ENCODE measurements at regions of chr11 and their contacts with region 1.

Region 1: DNA sequence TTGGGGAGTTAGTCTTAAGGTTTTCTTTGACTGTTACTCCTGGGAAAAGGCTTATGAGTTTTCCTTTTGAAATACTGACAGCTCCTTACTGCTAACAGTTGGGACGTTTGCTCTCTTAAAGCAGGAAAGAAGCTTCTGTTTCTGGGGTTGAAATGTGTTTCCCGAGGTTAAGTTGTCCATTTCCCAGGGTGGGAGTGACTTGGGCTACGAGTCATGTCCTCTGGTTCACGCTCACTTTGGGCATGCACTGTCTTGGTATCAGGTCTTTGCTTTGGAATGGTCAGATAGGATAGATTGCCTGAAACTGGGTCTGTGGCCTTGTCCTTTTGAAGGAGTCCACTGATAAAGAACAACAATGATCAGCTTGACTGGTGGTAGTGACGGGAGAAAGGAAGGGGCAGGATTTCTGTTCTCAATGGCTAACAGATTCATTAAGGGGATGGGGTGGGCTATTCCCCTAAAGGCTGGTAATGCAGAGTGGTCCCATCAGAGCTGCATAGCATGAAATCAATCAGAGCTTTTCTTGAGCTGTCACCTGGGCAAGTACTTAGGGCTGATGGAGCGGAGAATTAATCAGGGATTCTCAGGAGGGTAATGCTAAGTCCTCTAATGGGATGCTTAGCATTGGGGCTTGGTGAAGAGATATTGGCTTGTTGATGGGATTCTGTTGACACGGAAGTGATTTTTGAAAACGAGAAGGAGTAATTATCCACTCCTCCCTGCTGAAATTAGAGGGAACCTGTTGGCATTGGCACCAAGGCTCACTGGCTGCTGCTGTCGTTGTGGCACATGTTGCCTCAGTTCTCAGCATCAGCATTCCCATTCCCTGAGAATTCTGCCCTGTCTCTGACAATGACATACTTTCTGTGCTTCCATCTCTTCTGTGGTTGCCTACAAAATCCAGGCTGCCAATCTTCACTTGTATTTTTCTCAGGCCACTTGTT is 81.6 kb downstream of the TEAD1 start:
- DNase-seq: no peak
- H3K4me3 ChIP-seq: no peak overlapping the region
- H3K27ac ChIP-seq: no peak overlapping the region
- H3K4me1 ChIP-seq: peaks cover 26% of the 10 kb centered on the region
- H3K27me3 ChIP-seq: no peaks in the 10 kb centered on the region
- CTCF ChIP-seq: no peak

Region 2: GRCh38 chr11:13169709-13170108 is 413.9 kb after region 1 on chr11:
- CTCF ChIA-PET with region 1: no interaction called
- POLR2A ChIA-PET with region 1: interaction called, 12 read pairs
- intact Hi-C with region 1: no loop called
- DNase-seq: peak; percentile 32 to 50
- H3K4me3 ChIP-seq: no peak overlapping the region
- H3K27ac ChIP-seq: no peak overlapping the region
- H3K4me1 ChIP-seq: peaks cover 21% of the 10 kb centered on the region
- H3K27me3 ChIP-seq: no peaks in the 10 kb centered on the region
- CTCF ChIP-seq: no peak